Activated CD8-positive, alpha-beta memory T cell treated with anti-CD3 and anti-CD28 coated beads, Interleukin-2, amount 10 ng/mL, durations not matched to agents 7 days and 5 days (primary cell): ENCODE measurements at regions of chr14 and their contacts with region 1.

Region 1: DNA sequence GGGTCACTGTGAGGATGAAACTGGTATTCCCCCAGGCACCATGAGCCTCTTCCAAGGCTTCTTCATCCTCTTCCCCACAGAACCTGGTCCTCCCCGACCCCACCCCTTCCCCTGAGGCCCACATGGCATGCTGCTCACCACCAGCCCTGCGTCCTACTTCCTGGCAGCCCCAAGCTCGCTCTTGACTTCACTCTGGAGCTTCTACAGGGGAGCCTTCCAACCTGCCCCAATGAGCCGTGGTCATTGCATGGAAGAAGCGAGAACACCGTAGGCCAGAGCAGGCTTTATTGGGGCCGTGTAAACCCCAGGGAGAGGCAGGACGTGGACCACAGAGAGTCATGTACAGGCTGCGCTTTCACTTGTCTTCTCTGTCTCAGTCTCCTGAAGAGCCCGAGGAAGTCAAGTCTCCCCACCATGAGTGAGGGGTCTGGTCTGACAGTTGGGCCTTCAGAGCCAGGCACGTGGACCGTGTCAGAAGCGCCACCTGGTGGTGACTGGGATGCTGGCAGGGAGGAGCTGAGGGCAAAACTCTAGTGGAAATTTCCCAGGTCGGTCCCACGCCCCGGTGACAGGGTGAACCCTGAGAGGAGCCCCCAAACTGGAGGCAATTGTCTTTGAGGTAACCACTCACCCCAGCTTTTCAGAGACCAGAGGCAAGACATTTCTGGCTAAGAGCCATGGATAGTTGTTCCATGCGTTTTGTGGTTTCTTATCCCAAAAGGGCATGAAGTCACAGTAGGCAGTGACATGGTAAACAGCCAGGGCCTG is 17.5 kb downstream of the RPS6KL1 start:
- DNase-seq: peak; percentile 80
- ATAC-seq: peak; percentile 80
- H3K4me3 Mint-ChIP-seq: no peak overlapping the region
- H3K27ac Mint-ChIP-seq: peak overlapping the region; percentile 56
- H3K4me1 Mint-ChIP-seq: no peaks in the 10 kb centered on the region
- H3K27me3 Mint-ChIP-seq: no peaks in the 10 kb centered on the region

Region 2: GRCh38 chr14:74816124-74816523 is 89.4 kb before region 1 on chr14:
- CTCF ChIA-PET with region 1: no interaction called
- DNase-seq: no peak
- ATAC-seq: no peak
- H3K4me3 Mint-ChIP-seq: no peak overlapping the region
- H3K27ac Mint-ChIP-seq: no peak overlapping the region
- H3K4me1 Mint-ChIP-seq: peaks cover 4% of the 10 kb centered on the region
- H3K27me3 Mint-ChIP-seq: no peaks in the 10 kb centered on the region

Region 3: GRCh38 chr14:74875941-74876913 is 29.3 kb before region 1 on chr14 and contains the start of gene PROX2:
- CTCF ChIA-PET with region 1: interaction called, 84 read pairs
- DNase-seq: peak; percentile 56
- ATAC-seq: peak; percentile 81
- H3K4me3 Mint-ChIP-seq: peak within 1 kb of the TSS; percentile 14
- H3K27ac Mint-ChIP-seq: peak within 1 kb of the TSS; percentile 80
- H3K4me1 Mint-ChIP-seq: peaks cover 38% of the 10 kb centered on the region
- H3K27me3 Mint-ChIP-seq: no peaks in the 10 kb centered on the region
- total RNA-seq, gene PROX2: 0.21 to 0.44 TPM

Region 4: GRCh38 chr14:74881431-74882361 is 23.9 kb before region 1 on chr14 and contains the start of gene DLST:
- CTCF ChIA-PET with region 1: interaction called, 84 read pairs
- DNase-seq: peak; percentile 90
- ATAC-seq: peak; percentile 94
- H3K4me3 Mint-ChIP-seq: peak within 1 kb of the TSS; percentile 94
- H3K27ac Mint-ChIP-seq: peak within 1 kb of the TSS; percentile 92
- H3K4me1 Mint-ChIP-seq: peaks cover 59% of the 10 kb centered on the region
- H3K27me3 Mint-ChIP-seq: no peaks in the 10 kb centered on the region
- total RNA-seq, gene DLST: 106 to 119 TPM

Region 5: DNA sequence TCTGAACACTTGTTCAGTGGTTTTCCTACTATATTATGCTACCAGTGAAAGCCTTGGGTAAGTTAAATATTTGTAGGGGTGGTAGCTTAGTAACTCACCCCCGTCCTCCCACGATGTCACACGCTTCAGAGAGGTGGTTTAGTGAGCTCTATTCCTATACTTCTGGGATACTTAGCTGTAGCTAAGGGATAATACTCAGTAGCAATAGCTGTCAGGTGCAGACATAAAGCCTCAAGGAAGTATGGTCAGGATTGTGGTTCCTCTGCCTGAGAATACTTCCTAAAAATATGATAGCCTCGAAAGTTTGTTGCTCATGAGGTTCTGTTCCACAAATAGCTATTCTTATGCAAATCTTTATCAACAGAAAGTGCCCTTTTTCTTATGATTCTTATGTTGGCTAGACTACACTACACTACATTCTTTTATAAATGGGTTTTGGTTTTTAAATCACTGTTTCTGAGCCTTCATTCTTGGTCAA is 11.9 kb before region 1 on chr14:
- CTCF ChIA-PET with region 1: interaction called, 49 read pairs
- DNase-seq: no peak
- ATAC-seq: no peak
- H3K4me3 Mint-ChIP-seq: no peak overlapping the region
- H3K27ac Mint-ChIP-seq: no peak overlapping the region
- H3K4me1 Mint-ChIP-seq: peaks cover 14% of the 10 kb centered on the region
- H3K27me3 Mint-ChIP-seq: no peaks in the 10 kb centered on the region